ENCODE measurements at regions of chr12 and their contacts with region 1.

Region 1: DNA sequence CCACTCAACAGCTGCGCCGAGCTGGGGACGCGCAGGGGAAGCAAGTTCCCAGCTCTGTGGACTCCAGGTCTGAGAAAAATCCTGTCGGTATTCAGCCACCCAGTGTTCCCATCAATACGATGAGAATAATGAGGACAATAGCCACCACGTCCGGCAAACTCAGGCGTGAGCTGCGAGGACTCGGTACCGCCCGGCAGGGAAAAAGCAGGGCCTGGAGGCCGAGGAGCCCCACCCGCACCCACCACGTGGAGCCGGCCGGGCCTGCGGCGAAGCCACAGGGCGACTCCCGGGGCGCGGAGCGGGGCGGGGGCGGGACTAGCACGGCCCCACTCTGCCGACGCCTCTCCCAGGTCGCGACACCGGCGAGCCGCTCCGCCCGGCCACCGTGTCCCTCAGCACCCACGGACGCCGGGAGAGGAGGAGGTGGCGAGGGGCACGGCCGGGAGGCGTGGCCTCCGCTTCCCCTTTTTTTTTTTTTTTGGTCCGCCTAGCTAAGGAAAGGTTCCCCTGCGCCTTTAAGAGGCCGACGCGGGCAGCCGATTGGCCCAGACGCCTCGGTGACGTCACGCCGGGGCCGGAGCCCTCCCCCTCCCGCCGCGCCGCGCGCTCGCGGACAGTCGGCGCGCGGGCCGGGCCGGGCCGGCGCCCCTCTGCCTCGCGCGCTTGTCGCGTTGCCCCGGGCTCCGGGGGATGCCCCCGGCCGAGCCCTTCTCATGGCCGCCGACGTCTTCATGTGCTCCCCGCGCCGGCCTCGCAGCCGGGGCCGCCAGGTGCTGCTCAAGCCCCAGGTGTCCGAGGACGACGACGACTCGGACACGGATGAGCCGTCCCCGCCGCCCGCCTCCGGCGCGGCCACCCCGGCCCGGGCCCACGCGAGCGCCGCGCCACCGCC is at the start of gene MLXIP:
- DNase-seq: no peak
- ATAC-seq: peak; percentile 81
- H3K4me3 ChIP-seq: peak within 1 kb of the TSS; percentile 69
- H3K27ac ChIP-seq: no peak within 1 kb of the TSS; the same call in 1 of the 2 replicates
- H3K4me1 ChIP-seq: peaks cover 41% of the 10 kb centered on the region
- H3K27me3 ChIP-seq: no peaks in the 10 kb centered on the region
- CTCF ChIP-seq: 0 out of 6 replicates have a peak, but pooled peaks of 1 of the 3 experiments have one; percentile 1
- EP300 ChIP-seq: no peak
- POLR2A ChIP-seq: peak; percentile 83
- RAD21 ChIP-seq: no peak
- polyA plus RNA-seq, gene MLXIP: 1.1 to 1.2 TPM

Region 2: DNA sequence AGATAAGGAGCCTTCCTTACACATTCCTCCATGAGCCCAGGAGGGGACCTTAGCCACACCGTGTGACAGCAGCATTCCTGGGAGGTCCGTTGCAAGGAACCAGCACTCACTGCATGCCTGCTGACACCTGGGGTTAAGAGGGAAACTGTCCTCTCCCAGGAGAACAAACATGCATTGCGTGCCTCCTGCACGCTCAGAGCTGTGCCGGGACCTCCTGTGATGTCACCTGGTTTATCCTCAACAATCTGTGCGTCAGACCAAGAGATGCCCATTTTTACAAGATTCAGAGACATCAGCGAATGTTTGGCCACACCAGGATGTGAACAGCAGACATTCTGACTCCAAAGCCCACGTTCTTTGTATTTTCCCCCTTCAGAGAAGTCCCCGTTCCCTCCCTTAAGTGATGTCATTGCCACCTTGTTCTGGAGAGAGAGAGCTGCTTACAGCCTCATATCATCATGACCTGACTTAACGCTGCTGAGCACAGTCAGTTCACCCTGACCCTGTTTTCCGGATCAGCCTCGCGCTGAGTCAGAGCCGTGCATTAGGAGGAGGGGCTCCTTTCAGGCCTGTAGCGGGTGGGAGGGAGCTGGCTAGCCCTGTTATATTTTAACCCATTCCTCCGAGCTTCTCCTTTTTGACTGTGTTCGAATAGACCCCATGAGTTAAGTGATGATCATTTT is 329.7 kb before region 1 on chr12:
- CTCF ChIA-PET with region 1: no interaction called
- POLR2A ChIA-PET with region 1: no interaction called
- RAD21 ChIA-PET with region 1: no interaction called
- SMC1A ChIA-PET with region 1: no interaction called
- in situ Hi-C with region 1: no loop called
- intact Hi-C with region 1: no loop called
- DNase-seq: no peak
- ATAC-seq: peak; percentile 67
- H3K4me3 ChIP-seq: no peak overlapping the region
- H3K27ac ChIP-seq: no peak overlapping the region
- H3K4me1 ChIP-seq: no peaks in the 10 kb centered on the region
- H3K27me3 ChIP-seq: no peaks in the 10 kb centered on the region
- CTCF ChIP-seq: no peak
- EP300 ChIP-seq: no peak
- POLR2A ChIP-seq: no peak
- RAD21 ChIP-seq: no peak

Region 3: GRCh38 chr12:121917979-121918678 is 160.3 kb before region 1 on chr12 and contains the start of gene CFAP251:
- CTCF ChIA-PET with region 1: interaction called, 10 read pairs
- POLR2A ChIA-PET with region 1: no interaction called
- RAD21 ChIA-PET with region 1: interaction called, 7 read pairs
- SMC1A ChIA-PET with region 1: interaction called, 3 read pairs
- in situ Hi-C with region 1: no loop called
- intact Hi-C with region 1: no loop called
- DNase-seq: peak; percentile 50
- ATAC-seq: peak; percentile 100
- H3K4me3 ChIP-seq: peak within 1 kb of the TSS; percentile 57
- H3K27ac ChIP-seq: peak within 1 kb of the TSS; percentile 13; the same call in 1 of the 2 replicates
- H3K4me1 ChIP-seq: peaks cover 8% of the 10 kb centered on the region; the same call in 1 of the 2 replicates
- H3K27me3 ChIP-seq: no peaks in the 10 kb centered on the region
- CTCF ChIP-seq: peak; percentile 60 to 79 (median 73)
- EP300 ChIP-seq: no peak; a peak in 1 of 4 replicates
- POLR2A ChIP-seq: peak; percentile 67
- RAD21 ChIP-seq: peak; percentile 48
- polyA plus RNA-seq, gene CFAP251: 0.27 to 0.42 TPM

Region 4: DNA sequence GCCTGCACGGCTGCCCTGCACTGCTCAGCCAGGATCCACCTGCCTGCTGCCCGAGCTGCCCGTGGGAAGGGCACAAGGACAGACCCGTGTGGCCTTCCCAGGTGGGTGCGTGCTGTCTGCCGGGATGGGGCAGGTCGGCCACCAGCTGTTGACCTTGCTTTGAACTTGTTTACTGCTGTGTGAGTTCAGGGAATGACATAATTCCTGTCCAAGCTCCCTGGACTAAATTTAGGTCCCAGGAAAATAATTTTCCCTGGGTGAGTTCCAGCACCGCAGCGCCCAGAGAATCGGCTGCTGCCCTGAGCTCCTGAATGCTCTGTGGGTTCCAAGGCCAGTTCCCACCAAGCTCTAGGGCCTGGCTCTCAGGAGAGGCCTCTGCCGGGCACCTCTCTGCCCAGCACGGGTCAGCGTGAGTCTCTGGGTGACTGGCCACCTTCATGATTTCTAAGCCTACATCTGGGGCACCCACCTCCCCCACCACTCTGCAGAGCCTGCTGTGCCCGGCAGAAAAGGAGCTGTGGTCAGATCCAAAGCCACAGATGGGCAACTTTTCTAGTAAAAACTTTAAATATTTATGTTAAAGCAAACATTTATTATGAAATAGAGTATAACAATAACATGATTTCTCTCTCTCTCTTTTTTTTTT is 27.0 kb before region 1 on chr12:
- CTCF ChIA-PET with region 1: interaction called, 32 read pairs
- POLR2A ChIA-PET with region 1: no interaction called
- RAD21 ChIA-PET with region 1: interaction called, 7 read pairs
- SMC1A ChIA-PET with region 1: interaction called, 16 read pairs
- in situ Hi-C with region 1: no loop called
- intact Hi-C with region 1: no loop called
- DNase-seq: no peak
- ATAC-seq: no peak
- H3K4me3 ChIP-seq: no peak overlapping the region
- H3K27ac ChIP-seq: no peak overlapping the region
- H3K4me1 ChIP-seq: no peaks in the 10 kb centered on the region
- H3K27me3 ChIP-seq: no peaks in the 10 kb centered on the region
- CTCF ChIP-seq: no peak
- EP300 ChIP-seq: no peak
- POLR2A ChIP-seq: no peak
- RAD21 ChIP-seq: no peak

Region 5: GRCh38 chr12:122064025-122064777 is 14.2 kb before region 1 on chr12:
- CTCF ChIA-PET with region 1: interaction called, 14 read pairs
- POLR2A ChIA-PET with region 1: interaction called, 14 read pairs
- RAD21 ChIA-PET with region 1: interaction called, 10 read pairs
- SMC1A ChIA-PET with region 1: interaction called, 15 read pairs
- in situ Hi-C with region 1: no loop called
- intact Hi-C with region 1: loop called (anchors 1 kb)
- DNase-seq: peak; percentile 50
- ATAC-seq: peak; percentile 98
- H3K4me3 ChIP-seq: peak overlapping the region; percentile 52; the same call in 1 of the 2 replicates
- H3K27ac ChIP-seq: no peak overlapping the region
- H3K4me1 ChIP-seq: peaks cover 15% of the 10 kb centered on the region
- H3K27me3 ChIP-seq: no peaks in the 10 kb centered on the region
- CTCF ChIP-seq: peak; percentile 31 to 51 (median 47)
- EP300 ChIP-seq: no peak
- POLR2A ChIP-seq: 0 out of 2 replicates have a peak, but pooled peaks have one; percentile 21
- RAD21 ChIP-seq: peak; percentile 44; the same call in 1 of the 2 replicates

Measured in GM12878 (cell line).